WTC11 (cell line): ENCODE measurements at regions of chr9 and their contacts with region 1.

Region 1: DNA sequence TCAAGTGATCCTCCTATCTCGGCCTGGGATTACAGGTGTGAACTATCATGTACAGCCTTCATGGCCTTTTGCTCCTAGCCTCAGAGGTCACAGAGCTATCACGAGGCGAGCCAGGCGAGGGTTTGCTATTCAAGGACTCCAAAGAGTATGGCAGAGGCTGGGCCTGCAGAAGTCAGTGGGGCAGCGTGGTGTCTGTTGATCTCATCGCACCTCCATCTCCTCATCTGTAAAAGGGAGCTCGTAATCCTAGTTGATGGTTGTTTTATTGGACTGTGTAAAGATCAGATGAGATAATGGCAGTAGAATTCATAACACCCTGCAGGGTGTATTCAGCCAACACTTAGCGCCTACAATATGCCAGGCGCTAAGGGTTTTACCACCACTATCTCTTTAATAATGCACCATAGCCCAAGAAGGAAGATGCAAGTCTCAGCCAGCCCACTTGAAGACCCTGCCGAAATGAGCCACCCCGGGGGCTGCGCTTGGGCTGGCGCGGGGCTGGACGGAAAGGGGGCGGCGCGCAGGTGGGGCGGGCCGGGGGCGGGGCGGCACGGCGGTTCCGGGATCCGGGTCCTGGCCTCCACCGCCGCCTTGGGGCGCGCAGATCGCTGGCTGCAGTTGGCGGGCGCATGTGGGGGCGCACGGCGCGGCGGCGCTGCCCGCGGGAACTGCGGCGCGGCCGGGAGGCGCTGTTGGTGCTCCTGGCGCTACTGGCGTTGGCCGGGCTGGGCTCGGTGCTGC is at the start of gene GALNT12:
- DNase-seq: peak; percentile 67
- ATAC-seq: peak; percentile 78
- H3K4me3 Mint-ChIP-seq: peak within 1 kb of the TSS; percentile 77
- H3K27ac Mint-ChIP-seq: no peak within 1 kb of the TSS
- H3K4me1 Mint-ChIP-seq: peaks cover 33% of the 10 kb centered on the region
- H3K27me3 Mint-ChIP-seq: peaks cover 30% of the 10 kb centered on the region
- CTCF ChIP-seq: no peak
- total RNA-seq, gene GALNT12: 19.3 to 24.7 TPM (median 23.7 TPM) in 3 replicates

Region 2: DNA sequence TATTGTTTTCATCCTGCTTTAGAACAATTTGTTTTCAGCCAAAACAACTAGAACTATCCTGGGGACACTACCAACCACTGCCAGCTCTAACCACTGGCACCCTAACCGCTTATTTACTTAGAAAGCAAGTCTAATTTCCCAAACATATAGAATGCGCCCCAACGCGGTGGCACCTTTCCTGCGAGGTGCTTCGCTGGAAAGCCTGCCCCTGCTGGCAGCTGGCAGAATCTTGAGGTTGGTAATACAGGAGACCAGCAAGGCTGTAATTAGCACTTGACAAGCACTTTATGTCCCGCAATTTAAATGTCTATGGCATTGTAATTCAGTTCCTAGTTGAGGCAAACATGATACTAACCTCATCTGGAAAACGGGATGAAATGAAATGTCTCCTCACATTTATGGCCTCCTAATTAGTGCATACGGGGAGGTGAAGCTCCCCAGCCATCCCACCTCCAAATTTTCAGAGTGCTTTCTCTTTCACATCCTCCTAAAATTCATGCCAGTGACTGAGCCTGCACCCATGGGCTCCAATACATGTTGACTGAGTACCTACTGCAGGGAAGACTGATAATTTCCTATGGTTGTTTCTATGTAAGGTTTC is 128.9 kb before region 1 on chr9:
- CTCF ChIA-PET with region 1: no interaction called
- POLR2A ChIA-PET with region 1: no interaction called
- DNase-seq: peak; percentile 66
- ATAC-seq: peak; percentile 94
- H3K4me3 Mint-ChIP-seq: peak overlapping the region; percentile 28; the same call in 1 of the 2 replicates
- H3K27ac Mint-ChIP-seq: no peak overlapping the region
- H3K4me1 Mint-ChIP-seq: peaks cover 26% of the 10 kb centered on the region
- H3K27me3 Mint-ChIP-seq: peaks cover 42% of the 10 kb centered on the region
- CTCF ChIP-seq: peak; percentile 26; the same call in 1 of the 2 replicates

Region 3: DNA sequence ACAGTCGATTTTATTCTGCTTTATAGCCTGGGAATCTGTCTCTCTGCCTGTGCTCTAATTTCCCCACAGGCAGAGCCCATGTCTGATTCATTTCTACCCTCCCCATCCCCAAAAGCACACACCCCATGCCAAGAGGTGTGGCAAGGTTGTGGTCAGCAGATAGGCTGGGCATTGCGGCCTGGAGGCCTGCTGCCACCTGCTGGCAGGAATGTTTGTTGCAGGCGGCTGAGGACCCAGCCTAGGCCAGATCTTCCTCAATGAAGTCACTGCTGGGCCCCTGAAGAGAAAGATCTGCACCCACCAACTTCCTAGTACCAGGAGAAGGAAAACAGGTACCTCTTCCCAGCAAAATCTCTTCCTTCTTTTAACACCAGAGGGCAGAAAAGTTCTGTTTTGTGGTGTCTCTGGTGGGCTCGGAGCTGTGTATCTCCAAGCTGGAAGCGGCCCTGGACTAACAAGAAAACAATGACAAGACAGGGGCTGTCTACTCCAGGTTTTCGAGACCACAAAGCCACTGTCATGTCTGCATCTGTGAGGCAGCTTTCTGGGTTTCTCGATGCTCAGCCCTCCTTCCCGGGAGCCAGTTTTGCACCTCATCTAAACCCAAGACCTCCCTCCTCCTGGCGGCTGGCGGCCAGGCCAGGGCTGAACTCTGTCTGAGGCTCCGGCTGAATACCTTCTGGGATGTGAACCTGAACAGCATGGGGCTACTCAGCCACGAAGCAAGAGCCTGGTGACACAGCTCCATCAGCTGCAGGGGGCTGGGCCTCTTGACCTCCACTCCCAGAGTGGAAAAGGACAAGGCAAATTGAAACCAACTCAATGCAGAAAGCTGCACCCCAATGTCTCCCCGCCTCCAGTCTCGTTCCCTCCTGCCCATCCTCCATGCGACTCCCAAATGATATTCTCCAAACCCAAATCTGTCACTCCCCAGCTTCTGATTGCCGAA is 15.8 kb before region 1 on chr9:
- CTCF ChIA-PET with region 1: interaction called, 13 read pairs
- POLR2A ChIA-PET with region 1: interaction called, 7 read pairs
- DNase-seq: peak; percentile 86
- ATAC-seq: peak; percentile 88
- H3K4me3 Mint-ChIP-seq: no peak overlapping the region
- H3K27ac Mint-ChIP-seq: peak overlapping the region; percentile 82
- H3K4me1 Mint-ChIP-seq: peaks cover 45% of the 10 kb centered on the region
- H3K27me3 Mint-ChIP-seq: no peaks in the 10 kb centered on the region
- CTCF ChIP-seq: peak; percentile 100